Activated CD8-positive, alpha-beta T cell treated with anti-CD3 and anti-CD28 coated beads, Interleukin-2, amount 10 ng/mL, durations not matched to agents 7 days and 5 days (primary cell): ENCODE measurements at regions of chr12 and their contacts with region 1.

Region 1: DNA sequence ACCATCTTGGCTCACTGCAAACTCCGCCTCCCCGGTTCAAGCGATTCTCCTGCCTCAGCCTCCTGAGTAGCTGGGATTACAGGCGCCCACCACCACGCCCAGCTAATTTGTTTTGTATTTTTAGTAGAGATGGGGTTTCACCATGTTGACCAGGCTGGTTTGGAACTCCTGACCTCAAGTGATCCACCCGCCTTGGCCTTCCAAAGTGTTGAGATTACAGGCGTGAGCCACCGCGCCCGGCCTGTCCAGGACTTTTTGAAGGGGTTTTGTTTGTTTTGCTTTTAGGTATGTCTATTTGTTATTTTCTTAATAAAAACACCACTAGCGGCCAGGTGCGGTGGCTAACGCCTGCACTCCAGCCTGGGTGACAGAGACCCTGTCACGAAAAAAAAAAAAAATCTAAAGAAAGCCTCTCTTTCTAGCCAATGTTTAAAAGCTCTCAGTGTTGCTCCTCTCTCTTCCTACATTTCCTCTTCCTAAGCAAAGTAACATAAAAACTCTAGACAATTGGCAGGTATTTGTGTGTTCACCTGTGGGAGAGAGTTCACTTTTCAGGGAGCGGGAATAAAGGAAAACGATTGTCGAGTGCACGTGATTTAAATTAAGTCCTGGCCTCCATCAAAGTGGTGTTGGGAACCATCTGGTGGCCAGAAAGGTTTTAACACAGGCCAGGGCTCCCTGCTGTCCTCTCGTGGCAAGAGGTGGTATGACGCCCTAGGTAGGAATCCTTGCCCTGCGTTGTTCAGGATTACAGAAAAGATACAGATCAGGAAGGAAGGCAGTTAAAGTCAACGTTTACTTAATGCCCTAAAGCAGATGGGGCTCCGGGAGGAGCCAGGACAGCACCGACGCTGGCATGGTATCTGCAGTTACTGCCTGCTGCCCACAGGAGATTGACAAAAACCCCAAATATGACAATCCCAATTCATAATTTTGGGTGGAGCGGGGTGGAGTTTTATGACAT is 36.2 kb upstream of the ATP23 start:
- DNase-seq: peak; percentile 88
- ATAC-seq: peak; percentile 92
- H3K4me3 Mint-ChIP-seq: no peak overlapping the region
- H3K27ac Mint-ChIP-seq: no peak overlapping the region
- H3K4me1 Mint-ChIP-seq: peaks cover 6% of the 10 kb centered on the region
- H3K27me3 Mint-ChIP-seq: peaks cover 29% of the 10 kb centered on the region

Region 2: GRCh38 chr12:57765042-57765697 is 140.0 kb before region 1 on chr12:
- CTCF ChIA-PET with region 1: interaction called, 20 read pairs
- POLR2A ChIA-PET with region 1: no interaction called
- DNase-seq: peak; percentile 67
- ATAC-seq: peak; percentile 84
- H3K4me3 Mint-ChIP-seq: peak overlapping the region; percentile 83
- H3K27ac Mint-ChIP-seq: peak overlapping the region; percentile 80
- H3K4me1 Mint-ChIP-seq: peaks cover 28% of the 10 kb centered on the region
- H3K27me3 Mint-ChIP-seq: peaks cover 12% of the 10 kb centered on the region

Region 3: DNA sequence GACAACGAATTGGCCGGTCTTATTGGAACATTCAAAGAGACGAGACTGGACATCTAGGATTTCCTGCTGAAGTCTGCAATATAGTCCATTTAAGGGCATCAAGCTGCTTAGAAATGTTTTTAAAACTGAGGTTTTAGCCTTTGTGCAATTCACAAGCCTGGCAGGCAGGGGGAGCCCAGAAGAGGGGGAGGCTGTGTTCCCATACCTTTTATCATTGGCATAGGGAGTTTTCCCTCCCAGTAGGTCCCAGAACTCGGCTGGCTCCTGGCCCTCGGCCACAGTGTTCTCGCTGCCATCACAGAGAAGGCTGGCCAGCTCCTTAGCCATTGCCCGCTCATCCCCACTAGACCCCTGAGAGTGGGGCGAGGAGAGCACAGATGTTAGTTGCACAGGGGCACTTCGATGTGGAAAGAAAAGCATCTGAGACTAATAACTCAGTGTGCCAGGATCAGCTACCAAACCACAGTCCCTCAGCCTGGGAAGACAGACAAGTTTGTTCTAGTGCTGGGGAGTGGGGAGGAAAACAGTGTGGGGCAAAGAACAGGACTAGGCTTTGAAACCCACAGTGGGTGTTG is 101.7 kb before region 1 on chr12:
- CTCF ChIA-PET with region 1: interaction called, 128 read pairs
- POLR2A ChIA-PET with region 1: no interaction called
- DNase-seq: peak; percentile 49
- ATAC-seq: no peak
- H3K4me3 Mint-ChIP-seq: no peak overlapping the region
- H3K27ac Mint-ChIP-seq: no peak overlapping the region
- H3K4me1 Mint-ChIP-seq: no peaks in the 10 kb centered on the region
- H3K27me3 Mint-ChIP-seq: no peaks in the 10 kb centered on the region

Region 4: DNA sequence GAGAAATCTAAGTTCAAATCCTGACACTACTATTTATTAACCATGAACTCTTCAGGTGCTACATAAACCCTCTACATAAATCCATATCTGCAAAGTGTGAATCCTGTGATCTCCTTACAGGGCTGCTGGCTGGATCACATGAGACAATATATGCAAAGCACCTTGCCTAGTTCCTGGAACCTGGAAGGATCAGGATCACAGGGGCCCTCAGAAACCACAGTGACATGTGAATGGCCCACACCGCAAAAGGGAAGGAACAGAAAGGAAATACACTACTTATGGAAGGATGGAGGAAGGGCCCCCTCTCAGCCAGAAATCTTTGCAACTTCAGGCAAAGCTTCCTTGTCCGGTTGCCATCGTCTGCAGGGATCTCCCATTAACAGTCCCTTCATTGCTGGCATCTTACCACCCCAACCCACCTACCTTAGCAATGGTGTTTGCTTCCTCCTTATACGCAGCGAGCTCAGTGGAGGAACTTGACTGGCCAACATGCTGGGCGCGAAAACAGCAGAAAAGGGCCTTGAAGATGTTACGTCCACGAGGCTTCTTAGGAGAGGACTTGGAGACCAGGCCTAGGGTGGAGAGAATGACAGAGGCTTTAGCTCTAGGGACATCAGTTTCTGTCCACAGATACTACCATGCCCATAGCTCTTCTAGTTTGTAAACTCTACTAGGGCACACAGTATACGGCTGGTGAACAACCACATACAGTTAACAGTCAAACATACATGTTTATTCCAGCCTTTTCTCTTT is 75.9 kb before region 1 on chr12:
- CTCF ChIA-PET with region 1: interaction called, 119 read pairs
- POLR2A ChIA-PET with region 1: no interaction called
- DNase-seq: no peak
- ATAC-seq: no peak
- H3K4me3 Mint-ChIP-seq: no peak overlapping the region
- H3K27ac Mint-ChIP-seq: no peak overlapping the region
- H3K4me1 Mint-ChIP-seq: peaks cover 33% of the 10 kb centered on the region
- H3K27me3 Mint-ChIP-seq: no peaks in the 10 kb centered on the region

Region 5: DNA sequence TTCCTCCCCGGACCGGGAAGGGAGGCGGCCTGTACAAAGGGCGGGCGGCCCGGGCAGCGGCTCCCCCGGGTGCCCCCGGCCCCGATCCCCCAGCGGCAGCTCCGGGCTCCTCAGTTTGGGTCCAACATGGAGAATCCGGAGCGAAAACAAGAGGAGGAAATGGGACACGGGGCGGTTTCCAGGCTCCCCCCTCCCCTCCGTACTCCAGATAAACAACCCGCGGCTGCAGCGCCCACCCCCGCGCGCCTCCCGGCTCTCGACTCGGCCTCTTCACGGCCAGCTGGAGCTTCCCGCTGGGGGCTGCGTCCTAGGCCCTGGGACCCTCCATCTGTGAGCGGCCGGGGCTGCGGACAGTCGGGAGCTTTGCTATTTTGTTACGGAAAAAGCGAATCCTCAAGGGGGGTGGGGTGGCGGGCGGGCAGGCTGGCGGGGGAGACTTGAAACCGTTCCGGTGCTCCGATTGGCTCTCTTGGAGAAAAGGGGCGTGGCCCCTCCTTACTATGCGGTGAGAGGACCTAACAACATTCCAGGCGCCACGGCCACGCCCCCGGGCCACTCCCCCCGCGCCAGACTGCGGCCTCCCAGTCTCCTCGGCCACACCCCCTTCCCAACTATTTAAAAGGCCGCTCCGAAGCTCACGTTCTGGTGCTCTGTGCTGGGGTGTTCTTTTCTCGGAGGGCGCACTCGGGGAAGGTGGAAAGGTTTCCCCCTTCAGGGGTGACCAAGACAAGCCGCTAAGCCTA is 58.4 kb before region 1 on chr12 and contains the start of gene CTDSP2:
- CTCF ChIA-PET with region 1: interaction called, 91 read pairs
- POLR2A ChIA-PET with region 1: no interaction called
- DNase-seq: peak; percentile 89
- ATAC-seq: peak; percentile 56
- H3K4me3 Mint-ChIP-seq: peak within 1 kb of the TSS; percentile 81
- H3K27ac Mint-ChIP-seq: peak within 1 kb of the TSS; percentile 66
- H3K4me1 Mint-ChIP-seq: peaks cover 43% of the 10 kb centered on the region
- H3K27me3 Mint-ChIP-seq: peaks cover 27% of the 10 kb centered on the region
- total RNA-seq, gene CTDSP2: 100 to 114 TPM